ENCODE measurements at regions of chr17 and their contacts with region 1.

Region 1: GRCh38 chr17:979538-980405 is at the start of gene NXN:
- DNase-seq: peak; percentile 98
- CTCF ChIP-seq: no peak

Region 2: DNA sequence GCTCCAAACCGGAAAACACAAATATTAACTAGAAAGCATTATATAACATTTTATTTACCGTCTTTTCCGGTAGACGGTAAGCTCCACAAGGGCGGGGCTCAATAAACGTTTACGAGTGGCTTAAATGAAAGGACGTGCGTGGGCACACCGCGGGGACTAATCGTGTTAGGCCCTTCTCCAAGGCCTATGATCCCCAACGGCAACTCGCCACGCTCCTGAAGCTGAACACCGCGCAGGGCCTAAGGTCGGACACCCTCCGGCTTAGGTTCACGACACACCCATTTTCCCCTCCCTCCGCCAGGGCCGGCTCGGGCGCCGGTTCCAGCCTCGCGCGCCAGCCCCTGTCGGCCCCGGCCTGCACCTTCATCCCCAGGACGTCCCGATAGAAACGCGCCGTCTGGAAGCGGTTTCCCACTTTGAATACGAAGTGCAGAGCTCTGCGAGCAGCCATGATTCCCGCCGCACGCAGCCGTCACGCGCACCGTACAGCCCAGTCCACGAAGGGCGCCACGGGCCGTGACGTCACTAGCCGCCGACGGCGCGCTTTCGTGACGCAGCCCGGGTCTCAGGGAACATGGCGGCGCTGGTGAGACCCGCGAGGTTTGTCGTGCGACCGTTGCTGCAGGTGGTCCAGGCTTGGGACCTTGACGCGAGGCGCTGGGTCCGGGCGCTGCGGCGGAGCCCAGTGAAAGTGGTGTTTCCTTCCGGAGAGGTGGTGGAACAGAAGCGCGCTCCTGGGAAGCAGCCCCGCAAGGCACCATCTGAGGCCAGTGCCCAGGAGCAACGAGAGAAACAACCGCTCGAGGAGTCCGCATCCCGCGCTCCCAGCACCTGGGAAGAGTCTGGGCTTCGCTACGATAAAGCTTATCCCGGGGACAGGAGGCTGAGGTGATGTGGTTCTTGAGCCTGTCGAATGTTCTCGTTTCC is 197.7 kb before region 1 on chr17 and contains the starts of genes GLOD4 and MRM3:
- CTCF ChIA-PET with region 1: interaction called, 12 read pairs
- POLR2A ChIA-PET with region 1: no interaction called
- DNase-seq: peak; percentile 98
- CTCF ChIP-seq: no peak

Region 3: GRCh38 chr17:794876-795275 is 184.9 kb before region 1 on chr17:
- CTCF ChIA-PET with region 1: interaction called, 50 read pairs
- POLR2A ChIA-PET with region 1: interaction called, 3 read pairs
- DNase-seq: peak; percentile 72
- CTCF ChIP-seq: peak; percentile 58

Region 4: GRCh38 chr17:879549-880442 is 100.0 kb before region 1 on chr17:
- CTCF ChIA-PET with region 1: interaction called, 10 read pairs
- POLR2A ChIA-PET with region 1: no interaction called
- DNase-seq: peak; percentile 77
- CTCF ChIP-seq: peak; percentile 56

Region 5: GRCh38 chr17:935485-935884 is 44.3 kb before region 1 on chr17:
- CTCF ChIA-PET with region 1: no interaction called
- POLR2A ChIA-PET with region 1: no interaction called
- DNase-seq: no peak
- CTCF ChIP-seq: no peak

Measured in GM10248 (cell line).